ENCODE measurements at regions of chr2 and their contacts with region 1.

Region 1: DNA sequence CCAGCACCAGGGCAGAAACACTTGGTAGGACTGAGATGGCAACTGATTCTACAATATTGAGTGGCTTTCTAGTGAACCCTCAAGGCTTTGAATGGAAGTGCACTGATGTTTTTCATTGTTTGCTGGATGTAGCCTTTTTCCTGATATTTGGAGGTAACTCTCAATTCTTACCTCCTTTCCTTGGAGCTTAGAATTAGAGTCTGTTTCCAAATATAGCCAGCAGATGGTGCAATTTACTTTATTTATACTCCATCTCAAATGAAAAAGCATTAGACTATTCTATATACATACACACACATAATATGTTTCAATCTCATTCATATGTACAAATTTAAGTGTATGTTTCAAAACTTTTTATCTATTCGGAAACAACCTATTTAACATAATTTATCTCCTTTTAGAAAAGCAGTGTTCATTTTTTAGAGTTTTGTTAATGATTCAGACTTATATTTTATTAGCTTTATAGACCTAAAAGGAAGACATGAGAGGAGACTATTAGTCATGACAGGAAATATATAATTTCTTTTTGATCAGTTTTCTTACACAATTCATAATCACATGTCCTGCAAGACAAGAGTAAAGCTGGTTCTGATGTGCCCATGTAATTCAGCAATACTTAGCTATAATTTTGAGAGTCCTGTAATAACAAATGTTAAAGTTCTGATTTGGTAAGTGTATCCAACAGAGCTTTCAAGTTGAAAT is 124.8 kb downstream of the NUP35 start:
- DNase-seq: no peak
- H3K4me3 ChIP-seq: no peak overlapping the region
- H3K27ac ChIP-seq: no peak overlapping the region
- H3K27me3 ChIP-seq: peaks cover 0 to 6% (median 0%) of the 10 kb centered on the region in 45 donors
- CTCF ChIP-seq: peak; percentile 40 to 83 (median 67)

Region 2: GRCh38 chr2:183348492-183348891 is 99.5 kb after region 1 on chr2:
- intact Hi-C with region 1: loop called in 1 of 2 experiments (anchors 5 kb)
- DNase-seq: no peak
- H3K4me3 ChIP-seq: no peak overlapping the region
- H3K27ac ChIP-seq: peak overlapping the region in 3 of 59 donors; percentile 21 to 60 (median 23)
- H3K27me3 ChIP-seq: no peaks in the 10 kb centered on the region
- CTCF ChIP-seq: no peak

Region 3: DNA sequence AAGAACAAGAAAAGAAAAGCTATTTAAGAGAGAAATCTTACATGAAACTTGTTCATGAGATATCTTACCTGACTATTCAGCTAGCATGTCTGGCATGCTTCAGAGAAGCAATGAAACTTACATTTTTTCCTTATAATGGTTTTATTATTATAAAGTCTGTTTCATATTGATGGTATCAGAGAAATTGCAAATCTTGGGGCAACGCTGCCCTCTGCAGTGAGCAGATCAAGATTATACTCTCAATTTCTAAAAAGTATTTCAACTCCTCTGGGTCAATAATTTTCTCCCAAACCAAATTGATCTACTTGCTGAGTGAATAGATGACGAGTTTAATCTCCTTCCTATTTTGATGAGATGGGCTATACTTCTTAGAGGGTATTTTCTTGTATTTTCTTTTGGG is 110.8 kb after region 1 on chr2:
- intact Hi-C with region 1: loop called in 1 of 2 experiments (anchors 2 kb)
- DNase-seq: peak in 2 of 10 donors; percentile 10 to 33
- H3K4me3 ChIP-seq: no peak overlapping the region
- H3K27ac ChIP-seq: no peak overlapping the region
- H3K27me3 ChIP-seq: no peaks in the 10 kb centered on the region
- CTCF ChIP-seq: peak in 38 of 56 donors; percentile 6 to 58 (median 32)

Region 4: GRCh38 chr2:183782436-183782835 is 533.4 kb after region 1 on chr2:
- intact Hi-C with region 1: no loop called
- DNase-seq: no peak
- H3K4me3 ChIP-seq: no peak overlapping the region
- H3K27ac ChIP-seq: no peak overlapping the region
- H3K27me3 ChIP-seq: no peaks in the 10 kb centered on the region
- CTCF ChIP-seq: no peak